Activated CD4-positive, alpha-beta T cell treated with anti-CD3 and anti-CD28 coated beads, Interleukin-2, amount 10 ng/mL, durations not matched to agents 24 days and 14 days (primary cell): ENCODE measurements at regions of chr1 and their contacts with region 1.

Region 1: DNA sequence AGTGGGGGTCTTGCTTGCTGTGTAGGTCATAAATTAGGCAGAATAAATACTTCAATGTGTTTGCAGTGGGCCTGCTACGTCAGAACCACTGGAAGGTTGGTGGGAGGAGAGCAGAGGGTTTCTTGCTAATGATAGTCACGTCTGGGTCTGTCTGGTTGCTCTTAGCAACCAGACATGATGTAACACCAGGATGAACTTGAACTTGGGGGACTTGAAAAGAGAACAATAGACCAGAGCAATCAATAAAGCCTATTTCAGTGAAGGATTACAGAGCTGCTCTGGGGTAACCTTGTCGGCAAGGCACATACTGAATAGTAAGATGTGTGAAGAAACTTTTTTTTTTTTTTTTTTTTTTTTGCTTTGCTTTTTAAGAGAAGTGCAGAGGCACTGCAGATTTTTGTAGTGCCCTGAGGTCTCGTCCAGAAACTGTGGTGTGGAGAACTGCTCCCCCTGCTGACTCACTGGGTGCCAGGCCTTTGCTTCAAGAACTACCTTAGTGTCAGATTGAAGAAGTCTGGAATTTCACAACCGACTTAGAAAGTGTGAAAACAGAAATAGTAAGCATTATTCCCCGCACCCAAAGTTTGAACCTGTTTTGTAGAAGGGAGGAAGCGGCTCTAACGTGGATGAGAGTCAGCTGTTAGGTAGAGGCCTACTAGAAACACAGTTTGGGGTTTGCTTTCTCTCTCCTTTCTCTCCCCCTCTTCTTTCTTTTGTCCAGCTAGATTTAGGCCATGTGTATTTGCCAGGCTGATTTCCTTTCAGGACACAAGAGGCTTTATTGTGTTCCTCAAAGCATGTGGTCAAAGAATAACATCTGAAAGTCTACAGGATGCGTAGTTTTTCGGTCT is 271.6 kb downstream of the TM2D1 start:
- DNase-seq: peak; percentile 84
- H3K4me3 Mint-ChIP-seq: no peak overlapping the region
- H3K27ac Mint-ChIP-seq: no peak overlapping the region
- H3K4me1 Mint-ChIP-seq: peaks cover 8% of the 10 kb centered on the region
- H3K27me3 Mint-ChIP-seq: peaks cover 15% of the 10 kb centered on the region

Region 2: GRCh38 chr1:60848583-60849188 is 604.6 kb before region 1 on chr1:
- intact Hi-C with region 1: loop called (anchors 1 kb)
- DNase-seq: no peak
- H3K4me3 Mint-ChIP-seq: no peak overlapping the region
- H3K27ac Mint-ChIP-seq: no peak overlapping the region
- H3K4me1 Mint-ChIP-seq: no peaks in the 10 kb centered on the region
- H3K27me3 Mint-ChIP-seq: peaks cover 11% of the 10 kb centered on the region

Region 3: DNA sequence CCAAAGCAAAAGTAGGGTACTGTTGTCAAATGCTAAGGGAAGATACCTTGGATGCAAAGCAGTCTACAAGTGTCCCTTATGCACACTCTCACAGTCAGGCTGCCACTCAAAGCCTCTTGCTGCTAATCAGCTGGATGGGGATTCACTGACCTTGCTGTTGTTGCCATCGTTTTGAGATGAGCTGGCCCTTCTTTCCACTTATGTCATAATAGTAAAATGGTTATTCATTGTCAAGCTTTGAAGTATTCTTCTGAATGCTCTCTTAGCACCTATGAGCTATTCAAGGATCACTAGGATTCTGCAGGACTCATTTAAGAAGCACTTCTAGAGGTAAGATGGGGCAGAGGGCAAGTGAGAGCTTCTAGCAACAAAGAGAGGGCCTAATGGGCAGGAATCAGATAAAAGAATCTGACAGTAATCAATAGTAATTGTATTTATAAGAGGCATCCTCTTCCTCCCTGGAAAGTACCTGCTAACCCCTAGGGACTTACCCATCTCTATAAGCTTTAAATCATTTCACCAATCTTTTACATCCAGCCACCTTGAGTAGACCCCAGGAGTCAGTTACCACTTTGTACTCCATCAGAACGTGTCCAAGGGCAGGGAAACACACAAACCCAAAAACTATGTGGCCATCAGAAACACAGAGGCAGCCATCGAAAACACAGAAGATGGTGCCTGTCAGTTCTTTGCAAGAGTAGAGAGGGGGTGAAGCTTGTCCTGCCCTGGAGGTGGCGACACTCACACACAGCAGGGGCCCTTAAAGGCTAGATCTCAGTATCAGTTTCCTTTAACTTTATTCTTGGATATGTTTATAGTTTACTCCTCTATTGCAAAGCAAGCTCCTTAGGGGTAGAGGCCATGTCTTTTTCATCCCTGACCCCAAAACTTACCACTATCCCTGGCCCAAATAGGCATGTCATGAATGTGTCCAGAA is 474.6 kb before region 1 on chr1:
- intact Hi-C with region 1: loop called (anchors 5 kb)
- DNase-seq: peak; percentile 66
- H3K4me3 Mint-ChIP-seq: no peak overlapping the region
- H3K27ac Mint-ChIP-seq: no peak overlapping the region
- H3K4me1 Mint-ChIP-seq: no peaks in the 10 kb centered on the region
- H3K27me3 Mint-ChIP-seq: peaks cover 3% of the 10 kb centered on the region

Region 4: DNA sequence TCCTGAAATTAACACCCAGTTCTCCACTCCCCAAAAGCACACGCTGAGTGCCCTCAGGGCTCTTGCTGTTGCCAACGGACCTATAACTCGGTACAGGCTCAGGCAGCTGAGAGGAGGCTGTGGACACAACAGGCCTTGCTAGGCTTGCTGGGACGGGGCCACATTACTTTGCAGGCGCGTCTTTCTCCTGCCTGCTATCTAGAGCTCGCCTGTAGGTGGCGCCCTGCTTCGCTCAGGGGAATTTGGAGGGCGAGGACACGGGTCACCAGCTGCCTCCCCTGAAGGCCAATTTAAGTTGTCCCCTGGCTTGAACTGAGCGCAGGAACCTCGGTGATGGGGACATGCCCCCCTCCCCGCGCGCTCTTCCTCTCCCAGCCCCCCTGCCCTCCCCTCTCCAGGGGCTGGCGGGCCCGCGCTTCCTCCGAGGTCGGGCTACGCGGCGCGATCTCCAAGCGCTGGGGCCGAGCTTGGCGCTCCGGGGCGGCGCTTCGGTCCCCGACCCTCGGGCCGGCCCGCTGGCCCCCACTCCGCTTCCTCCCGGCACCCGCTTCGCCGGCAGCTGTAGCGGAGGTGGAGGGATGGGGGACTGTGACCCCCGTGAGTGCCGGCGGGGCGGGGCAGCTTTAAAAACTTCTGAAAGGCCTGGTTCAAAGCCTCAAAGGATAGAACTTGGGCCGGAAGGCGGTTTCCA is 403.3 kb before region 1 on chr1:
- intact Hi-C with region 1: loop called (anchors 1 kb)
- DNase-seq: peak; percentile 96
- H3K4me3 Mint-ChIP-seq: peak overlapping the region; percentile 76
- H3K27ac Mint-ChIP-seq: no peak overlapping the region
- H3K4me1 Mint-ChIP-seq: peaks cover 17% of the 10 kb centered on the region
- H3K27me3 Mint-ChIP-seq: peaks cover 57% of the 10 kb centered on the region

Region 5: GRCh38 chr1:61332196-61332753 is 121.1 kb before region 1 on chr1:
- intact Hi-C with region 1: no loop called
- DNase-seq: peak; percentile 66
- H3K4me3 Mint-ChIP-seq: peak overlapping the region; percentile 3
- H3K27ac Mint-ChIP-seq: peak overlapping the region; percentile 83
- H3K4me1 Mint-ChIP-seq: peaks cover 15% of the 10 kb centered on the region
- H3K27me3 Mint-ChIP-seq: peaks cover 20% of the 10 kb centered on the region

Region 6: DNA sequence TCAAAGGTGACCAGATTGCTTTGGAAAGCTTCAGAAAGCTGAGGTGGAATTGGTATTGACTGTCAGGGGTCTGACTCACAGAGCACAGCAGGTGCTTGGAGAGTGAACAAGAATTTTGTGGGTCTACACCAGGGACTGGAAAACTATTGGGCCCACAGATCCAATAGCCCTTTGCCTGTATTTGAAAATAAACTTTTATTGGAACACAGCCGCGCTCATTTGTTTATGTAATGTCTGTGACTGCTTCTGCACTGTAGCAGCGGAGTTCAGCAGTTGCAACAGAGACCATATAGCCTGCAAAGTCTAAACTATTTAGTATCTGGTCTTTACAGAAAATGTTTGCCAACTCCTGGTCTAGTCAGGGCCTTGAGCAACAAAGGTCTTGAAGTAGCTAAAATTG is 55.4 kb before region 1 on chr1:
- intact Hi-C with region 1: no loop called
- DNase-seq: no peak
- H3K4me3 Mint-ChIP-seq: no peak overlapping the region
- H3K27ac Mint-ChIP-seq: no peak overlapping the region
- H3K4me1 Mint-ChIP-seq: no peaks in the 10 kb centered on the region
- H3K27me3 Mint-ChIP-seq: peaks cover 2% of the 10 kb centered on the region